AG04449 (cell line): ENCODE measurements at regions of chr1 and their contacts with region 1.

Region 1: GRCh38 chr1:89454845-89455521 is 69.6 kb upstream of the LRRC8B start:
- DNase-seq: no peak
- H3K4me3 ChIP-seq: no peak overlapping the region
- CTCF ChIP-seq: peak; percentile 50

Region 2: GRCh38 chr1:88973520-88974137 is 481.4 kb before region 1 on chr1:
- CTCF ChIA-PET with region 1: interaction called, 12 read pairs
- POLR2A ChIA-PET with region 1: no interaction called
- DNase-seq: no peak
- H3K4me3 ChIP-seq: no peak overlapping the region
- CTCF ChIP-seq: no peak

Region 3: DNA sequence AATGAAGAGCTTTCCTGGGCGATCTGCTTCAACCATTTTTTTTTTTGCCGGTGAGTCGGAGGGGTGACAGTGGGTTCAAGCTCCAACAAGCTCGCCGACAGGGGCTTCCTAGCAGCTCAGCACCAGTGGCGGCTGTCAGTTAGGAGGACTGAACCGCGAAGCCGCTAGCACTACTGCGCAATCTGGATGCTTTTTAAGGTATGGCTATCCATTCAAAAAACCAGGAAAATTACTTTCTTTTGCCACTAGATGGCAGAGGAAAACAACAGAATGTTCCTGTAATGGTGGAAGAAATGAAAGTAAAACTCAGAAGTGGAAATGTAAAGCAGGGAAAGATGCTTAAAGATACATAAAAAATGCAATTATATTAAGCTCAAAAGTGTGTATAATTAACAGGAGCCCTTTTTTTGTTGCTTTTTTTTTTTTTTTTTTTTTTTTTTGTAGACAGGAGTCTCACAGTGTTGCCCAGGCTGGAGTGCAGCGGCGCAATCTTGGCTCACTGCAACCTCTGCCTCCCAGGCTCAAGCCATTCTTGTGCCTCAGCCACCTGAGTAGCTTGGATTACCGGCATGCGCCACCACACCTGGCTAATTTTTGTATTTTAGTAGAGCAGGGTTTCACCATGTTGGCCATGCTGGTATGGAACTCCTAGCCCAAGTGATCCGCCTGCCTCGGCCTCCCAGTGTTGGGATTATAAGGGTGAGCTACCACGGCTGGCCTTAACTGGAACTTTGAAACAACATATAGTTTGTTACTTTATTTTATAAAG is 471.0 kb before region 1 on chr1:
- CTCF ChIA-PET with region 1: interaction called, 28 read pairs
- POLR2A ChIA-PET with region 1: no interaction called
- DNase-seq: no peak
- H3K4me3 ChIP-seq: no peak overlapping the region
- CTCF ChIP-seq: peak; percentile 36

Region 4: DNA sequence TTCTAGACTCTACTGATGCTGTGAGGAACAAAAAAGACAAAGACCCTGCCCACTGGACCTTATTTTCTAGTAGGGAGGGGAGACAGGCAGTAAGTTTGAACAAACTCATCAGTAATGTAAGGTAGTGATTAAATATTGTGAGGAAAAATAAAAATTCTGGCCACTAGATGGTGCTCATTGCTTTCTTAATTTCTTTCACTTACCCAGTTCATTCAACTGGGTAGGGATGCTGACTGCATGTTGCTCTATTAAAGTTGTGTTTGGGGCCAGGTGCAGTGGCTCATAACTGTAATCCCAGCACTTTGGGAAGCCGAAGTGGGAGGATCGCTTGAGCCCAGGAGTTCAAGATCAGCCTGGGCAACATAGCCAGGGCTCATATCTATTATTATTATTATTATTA is 456.3 kb before region 1 on chr1:
- CTCF ChIA-PET with region 1: interaction called, 75 read pairs
- POLR2A ChIA-PET with region 1: no interaction called
- DNase-seq: no peak
- H3K4me3 ChIP-seq: no peak overlapping the region
- CTCF ChIP-seq: peak; percentile 12

Region 5: DNA sequence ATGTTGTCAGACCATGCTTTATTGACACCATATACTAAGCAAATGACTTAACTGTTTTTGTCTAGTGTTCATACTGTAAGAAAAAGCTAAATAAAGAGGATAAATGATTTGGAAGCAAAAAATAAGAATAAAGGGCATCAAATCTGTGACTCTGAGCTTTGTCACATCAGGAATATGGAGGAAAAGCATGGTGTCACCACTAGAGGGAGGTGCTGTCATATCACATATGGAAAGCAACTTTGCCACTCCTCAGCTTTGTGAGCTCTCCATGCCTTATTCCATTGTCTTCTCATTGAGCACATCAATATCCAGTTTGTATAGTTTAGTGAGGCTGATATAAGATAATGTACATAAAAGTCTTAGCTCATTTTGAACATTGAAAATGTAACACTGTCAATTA is 369.2 kb before region 1 on chr1:
- CTCF ChIA-PET with region 1: interaction called, 11 read pairs
- POLR2A ChIA-PET with region 1: no interaction called
- DNase-seq: no peak
- H3K4me3 ChIP-seq: no peak overlapping the region
- CTCF ChIP-seq: peak; percentile 75

Region 6: GRCh38 chr1:89466307-89466930 is 11.4 kb after region 1 on chr1:
- CTCF ChIA-PET with region 1: interaction called, 11 read pairs
- POLR2A ChIA-PET with region 1: no interaction called
- DNase-seq: no peak
- H3K4me3 ChIP-seq: no peak overlapping the region
- CTCF ChIP-seq: no peak

Region 7: DNA sequence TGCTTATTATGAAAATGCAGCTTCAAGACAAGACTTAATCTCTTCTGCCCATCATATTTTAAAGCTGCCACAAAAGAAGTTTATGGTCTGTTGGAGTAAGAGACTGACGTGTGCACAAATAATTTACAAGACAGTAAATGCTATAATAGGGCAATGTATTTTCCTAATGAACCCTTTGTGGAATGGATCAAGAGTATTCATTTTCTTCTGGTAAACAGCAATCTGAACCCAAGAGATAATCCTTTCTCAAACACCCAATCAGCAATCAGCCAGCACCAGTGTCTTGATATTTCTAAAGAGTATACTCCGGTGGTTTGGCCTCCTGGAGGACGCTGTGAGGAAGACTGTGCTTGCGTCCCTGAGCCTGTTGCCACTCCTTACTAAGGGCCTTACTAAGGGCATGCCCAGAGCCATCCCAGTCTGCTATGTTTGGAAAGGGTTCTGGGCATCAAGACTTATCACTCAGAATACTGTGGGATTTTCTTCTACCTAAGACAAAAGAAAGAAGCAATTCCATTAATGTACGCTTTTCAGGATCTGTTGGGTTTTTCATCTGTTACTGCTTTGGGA is 317.1 kb after region 1 on chr1:
- CTCF ChIA-PET with region 1: no interaction called
- POLR2A ChIA-PET with region 1: no interaction called
- DNase-seq: no peak
- H3K4me3 ChIP-seq: no peak overlapping the region
- CTCF ChIP-seq: no peak